ENCODE measurements at regions of chr17 and their contacts with region 1.

Region 1: GRCh38 chr17:31487648-31488263 is 96.3 kb downstream of the RAB11FIP4 start:
- DNase-seq: peak; percentile 88 to 94
- H3K4me3 ChIP-seq: peak overlapping the region; percentile 99
- H3K27ac ChIP-seq: no peak overlapping the region
- H3K4me1 ChIP-seq: peaks cover 32% of the 10 kb centered on the region
- H3K27me3 ChIP-seq: no peaks in the 10 kb centered on the region
- CTCF ChIP-seq: no peak

Region 2: DNA sequence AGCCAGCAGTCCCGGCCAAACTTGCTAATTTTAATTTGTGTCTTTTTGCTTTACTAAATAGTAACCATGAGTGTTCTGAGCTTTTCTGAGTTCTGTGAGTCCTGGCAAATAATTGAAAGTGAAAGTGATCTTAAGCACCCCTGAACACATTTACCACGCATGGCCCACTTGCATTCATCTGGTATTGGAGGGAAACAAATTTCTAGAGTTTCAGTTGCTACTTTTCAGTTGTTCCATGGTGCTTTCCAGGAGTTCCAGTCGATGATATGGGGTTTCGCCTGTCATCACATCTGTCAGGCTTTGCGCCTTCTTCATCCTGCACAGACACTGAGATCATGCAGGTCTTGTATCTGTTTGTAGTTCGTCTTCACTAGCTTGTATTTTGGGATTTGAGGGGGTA is 707.4 kb before region 1 on chr17:
- CTCF ChIA-PET with region 1: no interaction called
- POLR2A ChIA-PET with region 1: interaction called, 11 read pairs
- intact Hi-C with region 1: no loop called
- DNase-seq: no peak
- H3K4me3 ChIP-seq: no peak overlapping the region
- H3K27ac ChIP-seq: no peak overlapping the region
- H3K4me1 ChIP-seq: no peaks in the 10 kb centered on the region
- H3K27me3 ChIP-seq: no peaks in the 10 kb centered on the region
- CTCF ChIP-seq: no peak

Region 3: DNA sequence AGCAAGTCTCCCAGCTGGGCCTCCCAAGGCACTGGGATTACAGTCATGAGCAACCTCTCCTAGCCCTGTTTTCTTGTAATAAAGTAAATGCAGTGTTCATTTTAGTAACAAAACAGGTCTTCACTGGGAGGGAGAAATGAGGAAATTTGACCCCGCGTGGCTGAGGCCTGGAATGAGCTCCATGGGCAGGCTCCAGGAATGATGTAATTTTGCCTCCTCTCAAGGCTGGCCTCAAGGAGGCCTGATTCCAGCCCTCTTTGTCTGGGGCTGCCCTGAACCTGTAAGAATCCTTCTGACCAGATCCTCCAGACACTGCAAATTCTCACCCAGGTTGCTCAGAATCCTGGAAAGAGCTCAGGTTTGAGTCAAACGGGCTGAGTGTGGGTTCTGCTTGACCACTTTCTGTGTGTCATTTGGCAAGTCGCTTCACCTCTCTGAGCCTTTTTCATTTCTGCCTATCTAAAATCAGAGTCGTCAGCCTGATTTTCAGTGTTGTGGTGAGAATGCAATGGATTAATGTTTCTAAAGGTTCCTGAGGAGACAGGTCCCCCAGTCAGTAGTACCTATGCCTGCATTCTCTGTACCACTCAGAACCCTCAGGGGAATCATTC is 39.2 kb before region 1 on chr17:
- CTCF ChIA-PET with region 1: interaction called, 7 read pairs
- POLR2A ChIA-PET with region 1: interaction called, 6 read pairs
- intact Hi-C with region 1: loop called (anchors 1 kb)
- DNase-seq: peak; percentile 41 to 70
- H3K4me3 ChIP-seq: no peak overlapping the region
- H3K27ac ChIP-seq: peak overlapping the region; percentile 38
- H3K4me1 ChIP-seq: peaks cover 54% of the 10 kb centered on the region
- H3K27me3 ChIP-seq: no peaks in the 10 kb centered on the region
- CTCF ChIP-seq: no peak

Region 4: DNA sequence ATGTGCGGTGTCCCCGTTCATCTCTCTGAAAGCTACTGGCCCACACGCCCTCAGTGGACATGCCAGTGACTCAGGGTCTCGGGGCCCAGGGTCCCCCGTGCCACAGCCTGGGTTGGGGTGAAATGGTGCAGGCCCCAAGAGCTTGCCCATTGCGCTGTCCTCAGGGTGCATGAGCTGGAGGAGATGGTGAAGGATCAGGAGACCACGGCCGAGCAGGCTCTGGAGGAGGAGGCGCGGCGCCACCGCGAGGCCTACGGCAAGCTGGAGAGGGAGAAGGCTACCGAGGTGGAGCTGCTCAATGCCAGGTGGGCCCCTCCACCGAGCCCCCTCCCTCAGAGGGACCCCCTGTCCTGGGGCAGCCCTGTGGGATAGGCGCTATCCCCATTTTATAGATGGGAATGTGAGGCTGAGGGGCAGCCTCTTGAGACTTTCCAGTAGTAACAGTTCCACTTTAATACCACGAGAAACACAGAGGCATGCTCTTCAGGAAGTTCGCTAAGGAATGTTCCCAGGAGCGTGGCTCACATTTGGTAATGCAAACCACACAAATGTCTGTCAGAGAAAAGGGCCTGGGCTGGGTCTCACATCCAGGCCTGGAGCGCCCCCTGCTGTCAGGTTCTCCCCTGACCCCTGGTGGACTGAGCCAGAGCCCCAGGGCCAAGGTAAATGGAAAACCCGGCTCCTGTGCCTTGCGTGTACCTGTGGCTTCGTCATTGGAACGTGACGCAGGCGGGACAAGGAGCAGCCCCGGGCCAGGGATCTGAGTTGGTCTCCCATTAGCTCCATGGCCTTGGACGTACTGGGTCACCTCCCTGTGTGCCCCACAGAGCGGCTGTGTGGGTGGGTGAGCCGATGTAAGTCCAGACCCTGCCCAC is 37.4 kb after region 1 on chr17:
- CTCF ChIA-PET with region 1: no interaction called
- POLR2A ChIA-PET with region 1: interaction called, 29 read pairs
- intact Hi-C with region 1: loop called (anchors 5 kb)
- DNase-seq: peak; percentile 85 to 88
- H3K4me3 ChIP-seq: no peak overlapping the region
- H3K27ac ChIP-seq: no peak overlapping the region
- H3K4me1 ChIP-seq: peaks cover 5% of the 10 kb centered on the region; the same call in 1 of the 2 replicates
- H3K27me3 ChIP-seq: no peaks in the 10 kb centered on the region
- CTCF ChIP-seq: peak; percentile 94